Left ventricle myocardium superior (tissue), 1 donor: ENCODE measurements at regions of chr3 and their contacts with region 1.

Region 1: GRCh38 chr3:97793420-97794019 is 28.3 kb upstream of the CRYBG3 start:
- DNase-seq: no peak
- ATAC-seq: peak; percentile 25

Region 2: GRCh38 chr3:97932387-97932801 is 138.9 kb after region 1 on chr3:
- intact Hi-C with region 1: no loop called
- DNase-seq: peak; percentile 33
- ATAC-seq: peak; percentile 91

Region 3: DNA sequence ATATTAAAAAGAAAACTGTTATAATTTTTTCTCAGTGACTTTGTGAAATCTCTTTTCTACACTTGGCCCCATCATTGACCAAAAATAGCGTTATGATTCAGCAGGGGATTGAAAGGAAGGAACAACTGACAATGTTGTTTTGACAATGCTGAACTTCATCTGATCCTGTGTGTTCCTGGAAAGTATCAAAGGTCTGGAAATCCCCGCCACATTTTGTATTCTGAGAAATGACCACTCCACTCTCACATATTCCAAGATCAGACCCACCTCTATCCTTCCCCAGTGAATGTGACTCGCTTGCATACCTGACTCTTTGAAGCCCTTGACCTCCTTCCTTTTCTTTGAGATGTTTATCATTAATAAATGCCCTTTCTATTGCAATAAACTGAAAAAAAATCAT is 188.4 kb after region 1 on chr3:
- intact Hi-C with region 1: no loop called
- DNase-seq: no peak
- ATAC-seq: peak; percentile 24

Region 4: DNA sequence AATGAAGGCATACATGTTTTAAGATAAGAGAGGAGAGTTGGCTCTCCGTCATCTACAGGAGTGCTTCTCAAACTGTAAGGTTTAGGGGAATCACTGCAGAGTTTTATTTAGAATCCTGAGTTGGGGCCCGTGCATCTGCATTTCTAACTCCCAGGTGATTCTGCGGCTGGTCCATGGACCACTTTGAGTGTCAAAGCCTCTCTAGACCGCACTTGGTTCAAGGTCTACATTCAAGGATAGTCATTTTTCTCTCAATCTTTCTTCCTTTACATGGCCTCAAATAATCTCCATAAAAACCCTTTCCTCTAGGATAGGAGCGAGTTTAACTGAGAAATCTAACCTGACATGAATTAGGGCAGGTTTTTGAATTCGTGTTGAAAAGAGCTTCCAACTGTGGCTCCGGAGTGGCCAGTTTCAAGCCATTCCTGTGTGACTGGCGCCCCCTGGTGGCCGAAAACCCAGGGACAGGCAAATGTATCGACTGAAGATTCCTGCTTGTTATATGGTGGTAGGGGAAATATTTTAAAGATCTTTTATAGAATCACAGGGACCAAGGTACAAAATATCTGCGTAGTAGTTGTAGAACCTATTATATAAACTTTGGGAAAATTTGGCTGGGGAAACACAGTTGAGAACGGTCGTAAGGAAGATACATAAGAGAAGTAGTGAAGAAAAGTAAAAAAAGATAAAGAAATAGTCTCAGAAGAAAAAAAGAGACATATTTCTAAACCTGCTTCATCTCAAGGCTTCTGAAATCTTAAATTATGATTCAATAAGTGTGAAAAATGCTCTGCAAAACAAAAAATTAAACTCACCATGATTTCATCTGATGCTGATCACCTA is 229.7 kb after region 1 on chr3:
- intact Hi-C with region 1: loop called (anchors 1 kb)
- DNase-seq: peak; percentile 96
- ATAC-seq: peak; percentile 85

Region 5: GRCh38 chr3:98048586-98048985 is 255.1 kb after region 1 on chr3:
- intact Hi-C with region 1: no loop called
- DNase-seq: no peak
- ATAC-seq: no peak